T-cell (primary cell): ENCODE measurements at regions of chr9 and their contacts with region 1.

Region 1: DNA sequence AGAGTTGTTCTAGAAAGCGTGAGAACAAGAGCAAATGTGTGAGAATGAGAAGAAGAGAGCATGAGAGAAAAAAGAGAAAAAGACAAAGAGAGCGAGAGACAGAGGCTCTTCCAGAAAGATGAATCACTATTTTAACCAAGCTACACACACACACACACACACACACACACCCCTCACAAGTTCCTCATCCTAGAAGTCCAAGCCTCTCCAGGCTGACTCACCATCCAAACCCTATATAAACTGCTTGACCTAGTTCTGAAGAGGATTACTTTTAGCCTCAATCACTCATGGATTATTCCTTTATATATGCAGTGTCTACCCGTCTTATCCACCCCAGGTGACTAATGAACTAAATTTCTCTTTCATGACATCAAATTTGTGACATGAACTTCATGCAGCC is 37.6 kb downstream of the C9orf57 start:
- DNase-seq: no peak
- ATAC-seq: no peak
- H3K4me3 ChIP-seq: no peak overlapping the region
- H3K4me3 Mint-ChIP-seq: no peak overlapping the region
- H3K27ac ChIP-seq: no peak overlapping the region
- H3K27ac Mint-ChIP-seq: no peak overlapping the region
- H3K4me1 ChIP-seq: peaks cover 0 to 4% of the 10 kb centered on the region in 2 experiments
- H3K4me1 Mint-ChIP-seq: peaks cover 0 to 2% (median 2%) of the 10 kb centered on the region in 3 donors
- H3K27me3 ChIP-seq: peaks cover 0 to 4% of the 10 kb centered on the region in 2 experiments
- H3K27me3 Mint-ChIP-seq: peaks cover 0 to 3% of the 10 kb centered on the region in 2 donors

Region 2: GRCh38 chr9:71604197-71605063 is 418.4 kb before region 1 on chr9:
- CTCF ChIA-PET with region 1: interaction called, 5 to 19 read pairs
- POLR2A ChIA-PET with region 1: no interaction called
- DNase-seq: peak; percentile 51 to 83 (median 75)
- ATAC-seq: peak; percentile 73 to 86 (median 75)
- H3K4me3 ChIP-seq: no peak overlapping the region
- H3K4me3 Mint-ChIP-seq: no peak overlapping the region
- H3K27ac ChIP-seq: no peak overlapping the region
- H3K27ac Mint-ChIP-seq: no peak overlapping the region
- H3K4me1 ChIP-seq: no peaks in the 10 kb centered on the region
- H3K4me1 Mint-ChIP-seq: no peaks in the 10 kb centered on the region
- H3K27me3 ChIP-seq: no peaks in the 10 kb centered on the region
- H3K27me3 Mint-ChIP-seq: no peaks in the 10 kb centered on the region

Region 3: GRCh38 chr9:71683598-71684235 is 339.1 kb before region 1 on chr9:
- CTCF ChIA-PET with region 1: interaction called in 1 of 2 experiments, 10 read pairs
- POLR2A ChIA-PET with region 1: no interaction called
- DNase-seq: peak in 2 of 35 experiments; percentile 2 to 14
- ATAC-seq: no peak
- H3K4me3 ChIP-seq: no peak overlapping the region
- H3K4me3 Mint-ChIP-seq: peak overlapping the region in 1 of 3 donors; percentile 17
- H3K27ac ChIP-seq: no peak overlapping the region
- H3K27ac Mint-ChIP-seq: peak overlapping the region; percentile 23 to 71
- H3K4me1 ChIP-seq: peaks cover 31 to 41% of the 10 kb centered on the region in 2 experiments
- H3K4me1 Mint-ChIP-seq: peaks cover 53 to 68% (median 66%) of the 10 kb centered on the region in 3 donors
- H3K27me3 ChIP-seq: no peaks in the 10 kb centered on the region
- H3K27me3 Mint-ChIP-seq: no peaks in the 10 kb centered on the region

Region 4: GRCh38 chr9:71806901-71807307 is 215.9 kb before region 1 on chr9:
- CTCF ChIA-PET with region 1: interaction called, 8 to 17 read pairs
- POLR2A ChIA-PET with region 1: interaction called in 1 of 2 experiments, 6 read pairs
- DNase-seq: peak; percentile 23 to 77 (median 47)
- ATAC-seq: peak; percentile 74 to 93 (median 90)
- H3K4me3 ChIP-seq: no peak overlapping the region
- H3K4me3 Mint-ChIP-seq: no peak overlapping the region
- H3K27ac ChIP-seq: no peak overlapping the region
- H3K27ac Mint-ChIP-seq: peak overlapping the region; percentile 21 to 40
- H3K4me1 ChIP-seq: peaks cover 4 to 5% of the 10 kb centered on the region in 2 experiments
- H3K4me1 Mint-ChIP-seq: peaks cover 11 to 15% (median 13%) of the 10 kb centered on the region in 3 donors
- H3K27me3 ChIP-seq: no peaks in the 10 kb centered on the region
- H3K27me3 Mint-ChIP-seq: no peaks in the 10 kb centered on the region

Region 5: GRCh38 chr9:72038890-72039410 is 16.1 kb after region 1 on chr9:
- CTCF ChIA-PET with region 1: interaction called, 6 to 14 read pairs
- POLR2A ChIA-PET with region 1: no interaction called
- DNase-seq: peak; percentile 2 to 75 (median 40)
- ATAC-seq: peak; percentile 56 to 67 (median 62)
- H3K4me3 ChIP-seq: no peak overlapping the region
- H3K4me3 Mint-ChIP-seq: no peak overlapping the region
- H3K27ac ChIP-seq: no peak overlapping the region
- H3K27ac Mint-ChIP-seq: no peak overlapping the region
- H3K4me1 ChIP-seq: peaks cover 0 to 7% of the 10 kb centered on the region in 2 experiments
- H3K4me1 Mint-ChIP-seq: peaks cover 4 to 8% (median 5%) of the 10 kb centered on the region in 3 donors
- H3K27me3 ChIP-seq: peaks cover 0 to 12% of the 10 kb centered on the region in 2 experiments
- H3K27me3 Mint-ChIP-seq: peaks cover 12 to 18% of the 10 kb centered on the region in 2 donors